ENCODE measurements at regions of chr11 and their contacts with region 1.

Region 1: GRCh38 chr11:27698872-27699474 is 1.3 kb downstream of the BDNF start:
- DNase-seq: peak in 9 of 10 donors; percentile 62 to 95 (median 78)

Region 2: DNA sequence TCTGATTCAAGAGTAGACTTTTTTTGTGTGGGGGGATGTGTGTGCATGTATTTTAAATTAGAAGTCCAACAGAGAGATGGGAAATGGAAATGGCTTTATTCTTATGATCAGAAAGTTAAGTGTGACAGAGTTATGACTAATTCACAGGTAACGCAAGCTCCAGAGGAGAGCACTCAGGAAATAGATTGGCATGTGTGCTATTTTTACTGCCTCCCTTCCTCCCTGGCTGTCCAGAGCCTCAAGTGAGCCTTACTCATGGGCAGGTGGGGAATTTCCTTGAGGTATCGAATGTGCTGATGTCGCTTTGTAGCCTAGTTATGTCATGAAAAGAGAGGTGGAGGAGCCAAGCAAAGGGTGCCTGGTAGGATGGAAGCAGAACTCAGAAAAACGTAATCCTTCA is 71.6 kb after region 1 on chr11:
- intact Hi-C with region 1: no loop called
- DNase-seq: no peak

Region 3: GRCh38 chr11:28107748-28108618 is 409.0 kb after region 1 on chr11 and contains the starts of genes KIF18A and METTL15:
- intact Hi-C with region 1: loop called (anchors 10 kb)
- DNase-seq: peak; percentile 99 to 100 (median 100)

Region 4: DNA sequence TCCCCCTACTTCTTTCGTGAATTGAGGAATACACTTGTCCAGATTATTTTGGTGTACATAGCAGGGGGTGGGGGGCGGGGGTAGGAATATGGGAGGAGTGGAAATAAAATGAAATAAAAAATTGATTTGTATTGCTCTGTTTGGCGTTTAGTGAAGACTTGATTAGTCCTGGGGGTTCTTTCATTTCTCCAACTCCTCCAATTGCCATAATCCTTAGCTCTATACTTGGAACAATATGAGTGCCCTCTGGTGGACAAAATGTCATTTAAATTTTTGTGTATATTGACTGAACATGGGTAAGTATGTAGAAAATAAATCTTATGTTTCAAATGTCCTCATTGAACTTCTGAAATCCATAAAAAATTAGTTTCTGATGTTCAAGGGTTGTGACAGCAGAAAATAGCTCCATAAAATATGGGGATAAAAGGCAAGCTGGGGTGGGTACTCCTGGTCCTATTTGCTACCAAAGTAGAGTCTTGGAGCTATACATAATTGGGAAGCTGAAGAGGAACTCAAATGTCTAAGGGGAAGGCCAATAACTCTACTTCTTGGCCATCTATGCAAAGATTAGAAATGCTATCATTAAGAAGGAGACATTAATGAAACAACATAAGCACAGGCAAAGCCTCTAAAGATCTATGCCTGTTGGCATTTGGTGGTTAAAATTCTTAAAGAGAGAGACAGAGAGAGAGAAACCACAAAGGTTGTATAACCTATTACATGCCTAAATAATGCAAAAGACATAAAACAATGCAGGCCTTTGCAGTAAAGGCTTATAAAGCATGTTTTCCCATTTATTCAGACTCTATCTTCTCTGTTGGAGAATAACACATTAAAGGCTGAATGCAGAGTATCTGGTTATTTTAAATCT is 830.8 kb after region 1 on chr11:
- intact Hi-C with region 1: loop called (anchors 1 kb)
- DNase-seq: no peak

Region 5: GRCh38 chr11:28697920-28698827 is 999.2 kb after region 1 on chr11:
- intact Hi-C with region 1: loop called (anchors 5 kb)
- DNase-seq: peak; percentile 19 to 92 (median 66)

Region 6: GRCh38 chr11:29328961-29329441 is 1630.0 kb after region 1 on chr11:
- intact Hi-C with region 1: loop called (anchors 2 kb)
- DNase-seq: no peak